Stomach (tissue), 19 donors: ENCODE measurements at regions of chr15 and their contacts with region 1.

Region 1: DNA sequence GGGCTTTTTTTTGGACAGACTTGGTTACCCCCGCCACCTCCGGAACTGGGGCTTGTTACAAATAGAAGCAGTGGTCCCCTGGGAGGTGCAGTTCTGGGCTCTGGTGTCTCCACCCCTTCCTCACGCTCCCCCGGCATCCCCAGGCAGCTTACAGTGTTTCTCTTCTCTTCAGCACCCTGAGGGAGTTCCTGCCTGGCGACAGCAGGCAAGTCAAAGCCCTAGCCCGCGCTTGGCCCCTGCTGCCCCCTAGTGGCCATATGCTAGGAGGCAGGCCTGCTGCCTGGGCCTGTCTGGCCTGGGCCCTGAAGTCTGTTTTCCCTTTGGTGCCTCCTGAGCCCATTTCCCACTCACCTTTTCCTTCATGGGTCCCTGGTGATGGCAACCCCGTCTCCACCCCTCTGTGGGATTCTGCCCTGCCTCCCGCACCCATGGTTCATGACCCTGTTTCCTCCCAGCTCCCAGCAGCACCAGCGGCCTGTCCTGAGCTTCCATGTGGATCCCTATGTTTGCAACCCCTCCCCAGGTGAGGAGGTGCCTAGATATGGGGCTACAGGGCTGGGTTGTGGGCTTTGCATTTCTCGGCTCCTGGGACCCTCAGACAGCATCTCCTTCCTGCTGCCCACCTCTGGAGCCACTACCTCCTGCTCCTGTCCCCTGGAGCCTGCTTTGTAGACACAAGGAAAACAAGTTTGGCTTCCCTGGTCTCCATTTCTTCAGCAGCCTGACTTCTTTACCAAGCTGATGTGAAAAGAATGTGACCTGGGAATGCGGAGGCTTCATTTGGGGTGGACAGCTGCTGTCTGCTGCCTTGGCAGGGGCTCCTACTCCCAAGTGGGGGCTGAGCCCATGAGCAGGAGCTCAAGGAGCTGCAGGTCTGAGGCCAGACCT is 2.2 kb downstream of the SNX22 start:
- DNase-seq: peak; percentile 94 to 96
- H3K4me3 ChIP-seq: peak overlapping the region in 1 of 4 donors; percentile 62
- H3K27ac ChIP-seq: peak overlapping the region in 3 of 5 donors; percentile 33 to 49 (median 43)
- H3K4me1 ChIP-seq: peaks cover 24 to 52% (median 45%) of the 10 kb centered on the region in 4 donors
- H3K27me3 ChIP-seq: peaks cover 0 to 28% (median 22%) of the 10 kb centered on the region in 3 donors
- CTCF ChIP-seq: peak in 5 of 7 experiments; percentile 92 to 99 (median 97)
- EP300 ChIP-seq: no peak
- POLR2A ChIP-seq: peak in 1 of 4 donors; percentile 27

Region 2: GRCh38 chr15:64093627-64094417 is 59.9 kb before region 1 on chr15 and contains the start of gene CIAO2A:
- intact Hi-C with region 1: loop called (anchors 10 kb)
- DNase-seq: peak; percentile 95 to 99
- H3K4me3 ChIP-seq: peak within 1 kb of the TSS; percentile 63 to 88 (median 80)
- H3K27ac ChIP-seq: peak within 1 kb of the TSS; percentile 79 to 95 (median 92)
- H3K4me1 ChIP-seq: peaks cover 34 to 84% (median 63%) of the 10 kb centered on the region in 4 donors
- H3K27me3 ChIP-seq: no peaks in the 10 kb centered on the region
- CTCF ChIP-seq: no peak
- EP300 ChIP-seq: no peak
- POLR2A ChIP-seq: no peak
- total RNA-seq, gene CIAO2A: 27.2 to 425 (median 107) TPM